Activated CD4-positive, alpha-beta T cell treated with anti-CD3 and anti-CD28 coated beads for 36 hours (primary cell): ENCODE measurements at regions of chr4 and their contacts with region 1.

Region 1: DNA sequence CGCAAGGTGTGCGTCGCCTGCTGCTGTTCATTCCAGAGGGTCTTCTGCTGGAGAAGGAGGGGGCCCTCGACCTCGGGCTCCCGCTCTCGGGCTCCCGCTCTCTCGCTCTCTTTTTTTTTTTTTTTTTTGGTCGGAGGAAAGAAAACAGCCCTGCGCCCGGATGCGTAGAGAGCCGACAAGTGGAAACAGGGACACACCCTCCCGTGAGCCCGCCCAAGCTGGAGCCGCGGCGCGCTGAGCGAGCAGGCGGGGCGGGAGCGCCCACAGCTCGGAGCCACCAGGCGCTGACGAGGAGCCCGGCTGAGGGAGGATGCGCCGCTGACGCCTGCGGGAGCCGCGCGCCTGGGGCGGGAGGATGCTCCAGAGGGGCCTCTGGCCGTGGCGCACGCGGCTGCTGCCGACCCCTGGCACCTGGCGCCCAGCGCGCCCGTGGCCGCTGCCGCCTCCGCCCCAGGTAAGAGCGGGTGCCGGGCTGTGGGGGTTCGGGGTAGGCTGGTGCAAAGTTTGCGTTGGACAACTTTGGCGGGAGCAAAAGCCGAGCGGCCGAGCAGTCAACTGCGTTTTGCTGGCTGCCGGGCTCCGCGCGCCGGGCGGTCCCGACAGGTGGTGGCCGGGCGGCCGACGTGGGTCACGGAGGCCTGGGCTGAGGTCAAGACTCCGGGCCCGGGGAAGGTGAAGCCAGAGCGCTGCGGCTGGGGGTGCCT is at the start of gene MCUB:
- DNase-seq: peak; percentile 96
- ATAC-seq: peak; percentile 89
- H3K4me3 Mint-ChIP-seq: peak within 1 kb of the TSS; percentile 86
- H3K27ac Mint-ChIP-seq: peak within 1 kb of the TSS; percentile 97
- H3K4me1 Mint-ChIP-seq: peaks cover 49% of the 10 kb centered on the region
- H3K27me3 Mint-ChIP-seq: no peaks in the 10 kb centered on the region
- total RNA-seq, gene MCUB: 58.2 to 80.1 TPM

Region 2: DNA sequence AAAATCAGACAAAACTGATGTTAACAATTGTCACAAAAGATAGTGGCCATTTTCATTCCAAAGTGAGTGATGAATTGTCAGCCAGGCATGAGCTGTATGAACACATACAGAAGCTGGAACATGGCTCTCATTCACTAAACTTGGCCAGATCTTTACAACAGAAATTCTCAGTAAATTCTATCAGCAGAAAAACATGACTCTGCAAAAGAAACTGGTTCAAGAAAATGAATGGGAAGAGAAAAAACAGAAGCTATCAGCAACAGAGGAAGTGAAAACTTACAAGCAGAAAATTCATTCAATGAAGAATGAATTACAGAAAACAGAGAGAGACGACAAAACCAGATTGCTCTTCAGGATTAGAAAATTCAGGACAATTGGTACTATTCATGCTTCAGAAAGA is 507.3 kb before region 1 on chr4:
- CTCF ChIA-PET with region 1: no interaction called
- POLR2A ChIA-PET with region 1: no interaction called
- intact Hi-C with region 1: no loop called
- DNase-seq: no peak
- ATAC-seq: no peak
- H3K4me3 Mint-ChIP-seq: no peak overlapping the region
- H3K27ac Mint-ChIP-seq: no peak overlapping the region
- H3K4me1 Mint-ChIP-seq: no peaks in the 10 kb centered on the region
- H3K27me3 Mint-ChIP-seq: peaks cover 6% of the 10 kb centered on the region

Region 3: DNA sequence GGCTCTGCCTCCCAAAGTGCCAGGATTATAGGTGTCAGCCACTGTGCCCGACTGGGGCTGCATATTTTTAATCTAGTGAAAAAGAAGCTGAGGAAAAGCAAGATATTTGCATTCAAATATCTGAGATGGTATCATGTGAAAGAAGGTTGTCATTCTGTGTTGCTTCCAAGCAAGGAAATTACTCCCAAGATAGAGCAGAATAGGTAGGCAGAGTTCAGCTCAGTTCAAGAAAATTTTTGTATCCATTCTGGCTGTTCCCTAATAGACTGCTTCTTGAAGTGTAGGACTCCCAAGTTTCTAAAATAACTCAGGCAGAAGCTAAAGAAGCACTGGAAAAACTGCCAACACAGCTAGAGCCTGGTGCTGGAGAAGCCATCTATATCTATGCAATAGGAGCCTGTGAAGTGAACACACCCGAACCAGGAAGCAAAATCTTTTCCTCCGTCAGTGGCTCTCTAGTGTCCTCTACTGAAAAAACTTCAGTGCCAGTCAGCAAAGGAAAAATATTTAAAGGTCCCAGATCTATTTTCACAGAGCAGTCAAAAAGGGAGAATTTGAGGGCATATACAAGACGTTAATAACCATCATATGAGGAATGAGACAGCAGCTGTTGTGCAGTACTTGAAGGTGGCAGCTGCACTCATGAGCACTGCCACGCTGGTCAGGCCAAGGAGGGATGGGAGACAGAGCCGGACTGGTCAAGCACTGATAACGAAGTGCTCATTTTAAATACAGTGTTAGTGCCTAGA is 14.1 kb after region 1 on chr4:
- CTCF ChIA-PET with region 1: interaction called, 13 read pairs
- POLR2A ChIA-PET with region 1: interaction called, 11 read pairs
- intact Hi-C with region 1: no loop called
- DNase-seq: no peak
- ATAC-seq: peak; percentile 57
- H3K4me3 Mint-ChIP-seq: peak overlapping the region; percentile 31
- H3K27ac Mint-ChIP-seq: peak overlapping the region; percentile 67
- H3K4me1 Mint-ChIP-seq: peaks cover 71% of the 10 kb centered on the region
- H3K27me3 Mint-ChIP-seq: no peaks in the 10 kb centered on the region

Region 4: GRCh38 chr4:109588176-109588575 is 28.0 kb after region 1 on chr4:
- CTCF ChIA-PET with region 1: interaction called, 5 read pairs
- POLR2A ChIA-PET with region 1: interaction called, 3 read pairs
- intact Hi-C with region 1: loop called (anchors 1 kb)
- DNase-seq: peak; percentile 82
- ATAC-seq: peak; percentile 99
- H3K4me3 Mint-ChIP-seq: peak overlapping the region; percentile 11
- H3K27ac Mint-ChIP-seq: peak overlapping the region; percentile 86
- H3K4me1 Mint-ChIP-seq: peaks cover 84% of the 10 kb centered on the region
- H3K27me3 Mint-ChIP-seq: no peaks in the 10 kb centered on the region

Region 5: DNA sequence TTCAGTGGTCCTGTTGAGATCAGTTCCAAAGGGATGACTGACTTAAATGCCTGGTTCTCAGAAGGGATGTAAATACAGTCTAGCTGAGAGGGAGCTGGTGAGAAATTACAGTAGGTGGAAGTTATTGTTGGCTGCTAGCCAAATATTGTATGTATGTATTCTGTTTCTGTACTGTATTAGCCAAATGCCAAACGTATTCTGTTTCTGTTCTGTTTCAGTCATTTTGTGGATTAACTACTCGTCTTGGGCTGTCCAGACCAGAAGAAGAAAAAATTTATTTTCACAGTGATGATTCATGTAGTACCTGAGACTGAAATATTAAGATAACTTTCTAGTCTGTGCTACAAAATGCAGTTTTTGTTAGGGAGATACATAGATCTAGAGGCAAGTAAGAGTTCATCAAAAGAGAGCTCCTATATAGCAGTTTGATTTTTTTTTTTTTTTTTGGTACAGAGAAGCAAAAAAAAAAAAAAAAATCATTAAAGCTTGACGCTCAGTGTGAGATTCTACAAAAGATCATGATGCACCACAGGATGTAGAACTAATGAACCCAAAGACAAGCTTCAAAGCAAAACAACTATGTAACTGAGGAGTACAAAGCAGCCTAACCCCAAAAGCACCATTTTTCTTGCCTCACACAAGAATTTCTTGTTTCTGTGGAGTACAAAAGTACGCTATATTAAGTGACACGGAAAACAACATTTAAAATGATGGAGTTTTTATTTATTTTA is 88.3 kb after region 1 on chr4:
- CTCF ChIA-PET with region 1: interaction called, 8 read pairs
- POLR2A ChIA-PET with region 1: no interaction called
- intact Hi-C with region 1: loop called (anchors 2 kb)
- DNase-seq: no peak
- ATAC-seq: peak; percentile 34
- H3K4me3 Mint-ChIP-seq: peak overlapping the region; percentile 47
- H3K27ac Mint-ChIP-seq: peak overlapping the region; percentile 88
- H3K4me1 Mint-ChIP-seq: peaks cover 45% of the 10 kb centered on the region
- H3K27me3 Mint-ChIP-seq: no peaks in the 10 kb centered on the region

Region 6: DNA sequence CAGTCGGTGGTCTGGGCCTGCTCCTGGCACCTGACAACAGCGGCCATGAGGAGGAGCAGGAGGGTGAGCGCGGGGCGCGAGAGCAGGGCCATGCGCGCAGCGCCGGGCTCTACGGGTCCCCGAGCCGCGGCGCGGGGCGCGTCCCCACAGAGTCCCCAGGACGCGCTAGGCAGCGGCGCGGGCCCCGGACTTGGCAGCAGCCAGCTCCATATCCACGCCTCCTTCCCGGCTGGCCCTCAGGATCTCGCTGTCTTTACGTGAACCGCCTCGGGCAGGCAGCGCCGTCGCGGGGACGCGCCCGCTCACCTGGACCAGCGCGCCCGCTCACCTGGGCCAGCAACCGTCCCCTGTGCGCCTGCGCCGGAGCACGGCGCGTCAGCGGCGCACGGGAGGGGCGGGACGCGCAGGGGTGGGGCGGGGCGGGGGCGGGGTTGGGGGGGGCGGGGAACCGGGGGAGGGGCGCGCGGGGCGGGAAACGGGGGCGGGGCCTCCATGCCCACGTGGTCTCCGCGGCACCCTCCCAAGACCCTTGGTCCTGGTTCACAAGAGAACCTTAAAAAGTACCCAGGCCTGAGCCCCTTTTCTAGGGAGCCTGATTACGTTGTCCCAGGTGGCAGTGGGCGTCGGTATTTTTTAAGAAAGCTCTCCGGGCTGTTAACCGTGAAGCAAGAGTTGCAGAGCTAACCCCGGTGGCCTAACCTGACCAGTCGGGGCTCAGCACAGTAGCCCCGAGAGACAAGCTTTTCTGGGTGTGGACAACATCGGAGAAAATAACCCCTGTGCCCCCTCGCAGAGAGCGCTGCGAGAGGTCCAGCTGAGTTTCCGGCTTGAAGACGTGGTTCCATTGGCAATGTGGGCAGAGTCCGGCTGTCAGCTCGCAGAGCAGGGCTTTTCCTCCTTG is 169.8 kb after region 1 on chr4 and contains the start of gene PLA2G12A:
- CTCF ChIA-PET with region 1: no interaction called
- POLR2A ChIA-PET with region 1: interaction called, 3 read pairs
- intact Hi-C with region 1: loop called in 1 of 2 experiments (anchors 1 kb)
- DNase-seq: peak; percentile 85
- ATAC-seq: peak; percentile 87
- H3K4me3 Mint-ChIP-seq: peak within 1 kb of the TSS; percentile 84
- H3K27ac Mint-ChIP-seq: peak within 1 kb of the TSS; percentile 71
- H3K4me1 Mint-ChIP-seq: peaks cover 14% of the 10 kb centered on the region
- H3K27me3 Mint-ChIP-seq: no peaks in the 10 kb centered on the region
- total RNA-seq, gene PLA2G12A: 17.9 to 31.1 TPM

Region 7: GRCh38 chr4:109836986-109837385 is 276.9 kb after region 1 on chr4:
- CTCF ChIA-PET with region 1: no interaction called
- POLR2A ChIA-PET with region 1: no interaction called
- intact Hi-C with region 1: no loop called
- DNase-seq: no peak
- ATAC-seq: no peak
- H3K4me3 Mint-ChIP-seq: no peak overlapping the region
- H3K27ac Mint-ChIP-seq: no peak overlapping the region
- H3K4me1 Mint-ChIP-seq: no peaks in the 10 kb centered on the region
- H3K27me3 Mint-ChIP-seq: no peaks in the 10 kb centered on the region

Region 8: GRCh38 chr4:110139815-110140214 is 579.7 kb after region 1 on chr4:
- CTCF ChIA-PET with region 1: no interaction called
- POLR2A ChIA-PET with region 1: no interaction called
- intact Hi-C with region 1: no loop called
- DNase-seq: no peak
- ATAC-seq: no peak
- H3K4me3 Mint-ChIP-seq: no peak overlapping the region
- H3K27ac Mint-ChIP-seq: no peak overlapping the region
- H3K4me1 Mint-ChIP-seq: no peaks in the 10 kb centered on the region
- H3K27me3 Mint-ChIP-seq: no peaks in the 10 kb centered on the region